Kidney (tissue), 22 donors: ENCODE measurements at regions of chr17 and their contacts with region 1.

Region 1: DNA sequence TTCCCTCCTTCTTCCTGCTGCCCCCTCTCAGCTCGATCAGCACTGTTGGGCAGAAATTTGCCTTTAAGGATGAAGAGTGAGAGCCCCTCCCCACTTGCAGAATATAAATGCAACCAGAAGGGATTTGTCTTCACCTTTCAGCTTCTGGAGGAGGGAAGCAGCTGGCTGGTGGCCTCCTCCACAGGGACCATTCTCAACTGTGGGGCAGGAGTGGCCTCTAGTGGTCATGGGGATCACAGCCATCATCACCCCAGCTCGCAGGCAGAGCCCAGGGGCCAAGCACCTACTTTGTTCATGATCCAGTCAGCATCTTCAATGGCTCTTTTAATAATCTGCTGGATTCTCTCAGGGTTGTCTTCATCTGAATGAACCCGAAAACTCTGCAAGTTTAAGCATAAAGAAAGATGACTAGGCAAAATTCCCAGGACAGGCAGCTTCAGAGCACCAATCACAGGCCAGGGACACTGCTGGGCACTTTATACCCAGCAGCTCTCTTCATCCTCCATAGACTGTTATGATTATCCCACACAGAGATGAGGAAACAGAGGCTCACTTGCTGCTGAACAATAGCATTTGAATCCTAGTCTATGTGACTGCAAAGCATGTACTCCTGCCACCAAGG is 13.1 kb downstream of the LYRM9 start:
- DNase-seq: peak; percentile 79 to 92 (median 83)
- H3K4me3 ChIP-seq: no peak overlapping the region
- H3K27ac ChIP-seq: no peak overlapping the region
- H3K4me1 ChIP-seq: peaks cover 0 to 2% (median 0%) of the 10 kb centered on the region in 3 donors
- H3K27me3 ChIP-seq: no peaks in the 10 kb centered on the region
- CTCF ChIP-seq: peak; percentile 75

Region 2: GRCh38 chr17:27805520-27806146 is 74.5 kb before region 1 on chr17:
- intact Hi-C with region 1: loop called (anchors 10 kb)
- DNase-seq: peak; percentile 92 to 96 (median 92)
- H3K4me3 ChIP-seq: peak overlapping the region in 2 of 3 donors; percentile 55 to 59
- H3K27ac ChIP-seq: no peak overlapping the region
- H3K4me1 ChIP-seq: peaks cover 0 to 7% (median 0%) of the 10 kb centered on the region in 3 donors
- H3K27me3 ChIP-seq: no peaks in the 10 kb centered on the region
- CTCF ChIP-seq: peak; percentile 93

Region 3: GRCh38 chr17:28008542-28008941 is 128.4 kb after region 1 on chr17:
- intact Hi-C with region 1: no loop called
- DNase-seq: peak in 4 of 5 donors; percentile 66 to 91 (median 88)
- H3K4me3 ChIP-seq: no peak overlapping the region
- H3K27ac ChIP-seq: no peak overlapping the region
- H3K4me1 ChIP-seq: no peaks in the 10 kb centered on the region
- H3K27me3 ChIP-seq: no peaks in the 10 kb centered on the region
- CTCF ChIP-seq: no peak